Posterior vena cava (tissue), 2 donors: ENCODE measurements at regions of chr4 and their contacts with region 1.

Region 1: GRCh38 chr4:159206427-159206871 is 103.6 kb downstream of the RAPGEF2 start:
- DNase-seq: no peak

Region 2: GRCh38 chr4:158710814-158711213 is 495.6 kb before region 1 on chr4:
- intact Hi-C with region 1: loop called in 1 of 2 experiments (anchors 10 kb)
- DNase-seq: no peak

Region 3: GRCh38 chr4:158826057-158826456 is 380.4 kb before region 1 on chr4:
- intact Hi-C with region 1: no loop called
- DNase-seq: no peak